ENCODE measurements at regions of chr11 and their contacts with region 1.

Region 1: DNA sequence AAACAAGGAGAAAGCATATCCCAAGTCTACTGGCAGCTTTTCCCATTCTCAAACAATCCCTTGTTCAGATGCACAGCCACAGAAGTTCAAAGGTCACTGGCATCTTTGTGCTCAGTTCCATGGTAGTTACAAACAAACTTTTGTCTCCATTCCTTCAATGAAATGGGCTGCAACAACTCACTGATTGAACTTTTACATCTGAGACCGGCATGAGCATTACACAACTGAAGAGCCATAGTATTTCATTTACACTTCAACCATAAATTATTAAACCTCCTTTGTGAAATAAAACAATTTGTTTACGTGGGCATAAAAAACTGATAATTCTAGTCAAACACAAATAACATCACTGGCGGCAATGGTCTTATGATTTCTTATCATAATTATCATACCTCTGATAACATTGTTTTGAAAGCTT is 67.8 kb upstream of the ARHGAP32 start:
- DNase-seq: peak; percentile 95
- ATAC-seq: peak; percentile 84
- H3K4me3 ChIP-seq: no peak overlapping the region
- H3K27ac ChIP-seq: peak overlapping the region; percentile 64
- H3K4me1 ChIP-seq: peaks cover 73% of the 10 kb centered on the region
- H3K27me3 ChIP-seq: no peaks in the 10 kb centered on the region
- CTCF ChIP-seq: no peak
- EP300 ChIP-seq: peak in 1 of 2 experiments; percentile 73; a peak in 2 of 4 replicates
- POLR2A ChIP-seq: no peak
- RAD21 ChIP-seq: no peak

Region 2: DNA sequence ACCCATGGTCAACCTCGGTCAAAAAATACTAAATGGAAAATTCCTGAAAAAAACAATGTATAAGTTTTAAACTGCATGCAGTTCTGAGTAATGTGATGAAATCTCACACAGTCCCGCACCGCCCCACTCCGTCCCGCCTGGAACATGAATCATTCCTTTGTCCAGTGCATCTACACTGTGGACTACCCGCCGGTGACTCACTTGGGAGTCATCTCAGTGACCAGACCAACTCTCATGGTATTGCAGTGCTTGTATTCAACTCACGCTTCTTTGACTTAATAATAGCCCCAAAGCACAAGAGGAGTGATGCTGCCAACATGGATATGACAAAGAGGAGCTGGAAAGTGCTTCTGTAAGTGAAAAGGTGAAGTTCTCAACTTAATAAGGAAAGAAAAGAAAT is 116.6 kb before region 1 on chr11:
- CTCF ChIA-PET with region 1: no interaction called
- POLR2A ChIA-PET with region 1: no interaction called
- in situ Hi-C with region 1: no loop called
- intact Hi-C with region 1: loop called (anchors 2 kb)
- DNase-seq: peak; percentile 97
- ATAC-seq: peak; percentile 100
- H3K4me3 ChIP-seq: peak overlapping the region in 1 of 3 experiments; percentile 39; a peak in 1 of 6 replicates
- H3K27ac ChIP-seq: peak overlapping the region; percentile 78
- H3K4me1 ChIP-seq: peaks cover 41% of the 10 kb centered on the region
- H3K27me3 ChIP-seq: no peaks in the 10 kb centered on the region
- CTCF ChIP-seq: no peak
- EP300 ChIP-seq: peak in 1 of 2 experiments; percentile 77; a peak in 2 of 4 replicates
- POLR2A ChIP-seq: no peak
- RAD21 ChIP-seq: no peak

Region 3: DNA sequence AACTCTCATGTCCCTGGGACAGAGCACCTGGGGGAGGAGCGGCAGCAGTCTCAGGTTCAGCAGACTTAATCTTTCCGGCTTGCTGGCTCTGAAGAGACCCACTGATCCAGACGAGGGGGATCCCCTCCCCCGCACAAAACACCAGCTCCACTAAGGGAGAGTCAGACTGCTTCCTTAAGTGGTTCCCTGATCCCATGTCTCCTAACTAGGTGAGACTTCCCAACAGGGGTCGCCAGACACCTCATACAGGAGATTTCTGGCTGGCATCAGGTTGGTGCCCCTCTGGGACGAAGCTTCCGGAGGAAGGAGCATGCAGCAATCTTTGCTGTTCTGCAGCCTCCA is 398.6 kb after region 1 on chr11:
- CTCF ChIA-PET with region 1: no interaction called
- POLR2A ChIA-PET with region 1: no interaction called
- in situ Hi-C with region 1: no loop called
- intact Hi-C with region 1: no loop called
- DNase-seq: no peak
- ATAC-seq: no peak
- H3K4me3 ChIP-seq: no peak overlapping the region
- H3K27ac ChIP-seq: no peak overlapping the region
- H3K4me1 ChIP-seq: no peaks in the 10 kb centered on the region
- H3K27me3 ChIP-seq: no peaks in the 10 kb centered on the region
- CTCF ChIP-seq: no peak
- EP300 ChIP-seq: no peak
- POLR2A ChIP-seq: no peak
- RAD21 ChIP-seq: no peak